HCT116 (cell line): ENCODE measurements at regions of chr2 and their contacts with region 1.

Region 1: GRCh38 chr2:168166902-168167510 is 80.4 kb downstream of the STK39 start:
- DNase-seq: peak; percentile 83
- ATAC-seq: peak; percentile 86
- H3K4me3 ChIP-seq: peak overlapping the region in 1 of 2 experiments; percentile 19; a peak in 2 of 4 replicates
- H3K27ac ChIP-seq: peak overlapping the region; percentile 89
- H3K4me1 ChIP-seq: peaks cover 54 to 90% of the 10 kb centered on the region in 2 experiments
- H3K27me3 ChIP-seq: no peaks in the 10 kb centered on the region
- CTCF ChIP-seq: no peak
- POLR2A ChIP-seq: no peak
- RAD21 ChIP-seq: peak; percentile 18; the same call in 1 of the 2 replicates

Region 2: DNA sequence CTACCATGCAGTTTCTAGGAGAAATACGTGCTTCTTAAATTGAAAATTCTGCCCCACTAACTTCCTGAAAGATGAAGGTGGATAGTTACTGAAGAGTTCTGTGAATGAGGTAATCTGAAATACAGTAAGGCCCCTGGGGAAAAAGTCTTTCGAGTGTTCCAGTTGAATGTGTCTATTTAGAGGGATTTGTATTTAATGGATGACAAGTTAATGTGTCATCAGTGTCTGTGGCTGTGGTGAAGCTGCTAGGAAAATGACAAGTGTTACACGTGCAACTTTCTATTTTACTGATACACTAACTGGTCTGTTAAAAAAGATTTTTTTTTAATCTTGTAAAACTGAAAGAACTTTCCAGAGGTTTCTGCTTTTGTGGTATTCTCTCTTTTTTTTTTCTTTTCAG is 304.2 kb before region 1 on chr2:
- CTCF ChIA-PET with region 1: no interaction called
- POLR2A ChIA-PET with region 1: no interaction called
- RAD21 ChIA-PET with region 1: no interaction called
- intact Hi-C with region 1: no loop called
- DNase-seq: no peak
- ATAC-seq: no peak
- H3K4me3 ChIP-seq: no peak overlapping the region
- H3K27ac ChIP-seq: no peak overlapping the region
- H3K4me1 ChIP-seq: no peaks in the 10 kb centered on the region
- H3K27me3 ChIP-seq: peaks cover 20% of the 10 kb centered on the region; the same call in 1 of the 2 replicates
- CTCF ChIP-seq: no peak
- POLR2A ChIP-seq: no peak
- RAD21 ChIP-seq: no peak

Region 3: DNA sequence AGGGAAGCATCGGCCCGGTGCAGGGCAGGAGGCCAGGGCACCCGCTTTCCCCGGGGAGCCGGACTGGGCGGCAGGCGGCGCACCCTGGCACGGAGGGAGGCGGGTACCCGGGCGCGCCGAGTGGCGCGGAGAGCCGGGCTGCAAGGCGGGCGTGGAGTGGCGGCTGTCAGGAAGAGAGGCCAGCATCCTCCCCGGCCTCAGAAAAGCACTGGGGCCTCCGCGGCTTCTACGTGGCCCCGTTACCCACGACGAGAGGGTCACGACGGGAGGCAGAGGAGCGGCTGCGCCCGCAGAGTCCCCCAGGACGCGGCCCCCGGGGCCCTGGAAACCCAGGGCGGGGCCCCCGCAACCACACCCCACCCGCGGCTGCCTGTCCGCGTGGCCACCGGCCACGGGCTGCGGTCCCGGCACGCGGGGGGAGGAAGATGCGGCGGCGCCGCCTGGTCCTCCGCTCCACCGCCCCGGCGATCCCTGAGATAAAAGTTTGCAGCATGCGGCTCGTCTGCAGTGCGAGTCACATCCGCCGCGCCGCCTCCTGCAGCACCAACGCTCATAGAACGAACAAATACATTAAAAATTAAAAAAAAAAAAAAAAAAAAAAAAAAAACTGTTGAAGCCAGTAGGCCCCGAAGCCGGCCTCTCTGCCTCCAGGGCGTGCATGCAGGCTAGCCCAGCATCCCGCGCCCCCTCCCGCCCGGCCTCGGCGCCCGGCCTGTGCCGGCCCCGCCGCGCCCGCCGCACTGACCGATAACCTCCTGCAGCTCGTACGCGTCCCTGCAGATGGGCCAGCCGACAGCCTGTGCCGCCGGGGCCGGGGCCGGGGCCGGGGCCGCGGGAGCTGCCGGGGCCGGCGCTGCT is 79.7 kb after region 1 on chr2:
- CTCF ChIA-PET with region 1: no interaction called
- POLR2A ChIA-PET with region 1: no interaction called
- RAD21 ChIA-PET with region 1: no interaction called
- intact Hi-C with region 1: loop called (anchors 5 kb)
- DNase-seq: no peak
- ATAC-seq: peak; percentile 54
- H3K4me3 ChIP-seq: peak overlapping the region; percentile 56 to 75
- H3K27ac ChIP-seq: peak overlapping the region; percentile 95
- H3K4me1 ChIP-seq: peaks cover 39 to 57% of the 10 kb centered on the region in 2 experiments
- H3K27me3 ChIP-seq: no peaks in the 10 kb centered on the region
- CTCF ChIP-seq: peak in 2 of 3 experiments; percentile 19 to 44; a peak in 4 of 6 replicates
- POLR2A ChIP-seq: no peak
- RAD21 ChIP-seq: no peak

Region 4: DNA sequence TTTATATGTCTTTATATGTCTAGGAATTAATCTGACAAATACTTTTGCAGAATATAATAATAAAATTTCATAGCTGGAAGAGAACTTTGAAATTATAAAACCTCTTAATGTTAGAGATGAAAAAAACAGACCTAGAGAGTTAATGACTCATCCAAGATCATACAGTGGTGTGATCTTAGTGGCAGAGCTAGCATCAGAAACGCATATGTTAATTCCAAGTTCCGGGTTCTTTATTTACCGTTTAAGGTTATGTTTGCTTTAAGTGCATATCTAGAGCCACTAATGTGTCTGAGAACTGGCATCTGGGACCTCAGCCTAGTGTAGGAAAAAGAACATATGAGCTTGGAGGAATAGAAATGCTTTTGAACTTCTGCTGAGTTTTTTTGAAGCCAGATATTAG is 313.3 kb after region 1 on chr2:
- CTCF ChIA-PET with region 1: no interaction called
- POLR2A ChIA-PET with region 1: no interaction called
- RAD21 ChIA-PET with region 1: no interaction called
- intact Hi-C with region 1: no loop called
- DNase-seq: no peak
- ATAC-seq: no peak
- H3K4me3 ChIP-seq: no peak overlapping the region
- H3K27ac ChIP-seq: no peak overlapping the region
- H3K4me1 ChIP-seq: no peaks in the 10 kb centered on the region
- H3K27me3 ChIP-seq: no peaks in the 10 kb centered on the region
- CTCF ChIP-seq: no peak
- POLR2A ChIP-seq: no peak
- RAD21 ChIP-seq: no peak